ENCODE measurements at regions of chrX and their contacts with region 1.

Region 1: DNA sequence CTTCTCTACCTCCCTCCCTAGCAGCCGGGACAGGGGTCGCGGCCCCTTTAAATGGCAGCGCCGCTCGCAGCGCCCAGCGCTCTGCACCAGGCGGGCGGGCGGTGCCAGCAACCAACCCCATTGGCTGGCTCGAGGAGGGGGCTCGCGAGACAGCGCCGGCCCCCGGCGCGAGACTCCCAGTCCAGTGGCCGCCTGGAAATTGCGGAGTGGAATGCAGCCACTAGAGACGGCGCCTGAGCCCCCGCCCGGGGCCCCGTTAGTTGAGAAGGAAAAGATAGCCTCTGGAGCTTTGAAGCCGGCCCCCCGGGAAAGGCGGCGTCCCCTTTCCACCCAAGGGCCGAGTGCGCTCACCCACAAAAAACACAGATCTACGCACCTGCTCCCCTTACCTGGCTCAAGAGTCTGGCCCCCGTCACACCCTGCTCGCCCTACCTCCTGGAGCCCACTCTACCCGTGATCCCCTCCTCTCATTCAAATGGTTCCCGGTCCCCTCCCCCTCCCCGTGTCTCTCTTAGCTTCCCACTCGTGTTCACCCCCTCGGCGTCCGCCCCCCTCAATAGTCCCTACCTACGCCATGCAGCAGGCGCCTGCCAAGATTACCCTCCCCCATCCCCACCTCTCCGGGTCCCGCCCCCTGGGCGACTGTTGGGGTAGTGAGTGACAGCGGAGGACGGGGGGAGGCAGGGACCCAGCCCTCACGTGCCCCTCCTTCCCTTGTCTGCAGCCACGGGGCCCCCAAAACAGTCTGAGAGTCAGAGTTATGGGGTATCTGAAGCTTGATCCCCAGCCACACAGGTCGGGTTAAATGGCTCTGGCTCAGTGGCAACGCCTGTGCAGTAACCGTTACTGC is at the start of gene ZMYM3:
- DNase-seq: peak; percentile 73 to 85
- ATAC-seq: peak; percentile 83 to 90
- H3K4me3 ChIP-seq: peak within 1 kb of the TSS; percentile 69 to 85 (median 82)
- H3K27ac ChIP-seq: peak within 1 kb of the TSS; percentile 88 to 94 (median 94)
- H3K4me1 ChIP-seq: peaks cover 0 to 8% of the 10 kb centered on the region in 2 donors
- H3K27me3 ChIP-seq: no peaks in the 10 kb centered on the region
- CTCF ChIP-seq: peak in 1 of 5 experiments; percentile 22
- POLR2A ChIP-seq: peak; percentile 48 to 53
- total RNA-seq, gene ZMYM3: 7.1 to 10.2 (median 8.9) TPM

Region 2: DNA sequence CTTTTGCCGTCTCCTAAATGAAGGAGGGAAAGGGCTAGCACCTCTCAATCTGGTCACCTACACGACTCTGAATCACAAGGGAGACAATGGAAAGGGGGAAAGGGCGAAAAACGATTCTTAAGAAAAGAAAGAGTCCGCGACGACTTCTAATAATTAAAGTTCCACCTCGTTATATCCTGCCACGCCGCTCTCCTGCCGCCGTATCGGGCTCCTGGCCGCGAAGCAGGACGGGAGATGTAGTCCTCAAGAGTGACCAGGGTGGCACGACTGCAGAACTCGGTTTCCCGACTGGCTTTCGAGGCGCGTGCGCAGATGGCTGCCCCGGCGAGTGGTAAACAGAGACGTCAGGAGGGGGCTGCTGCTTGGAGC is 158.8 kb before region 1 on chrX and contains the start of gene FOXO4:
- in situ Hi-C with region 1: no loop called
- intact Hi-C with region 1: no loop called
- DNase-seq: peak; percentile 85 to 86
- ATAC-seq: peak; percentile 95 to 96
- H3K4me3 ChIP-seq: peak within 1 kb of the TSS; percentile 62 to 71 (median 66)
- H3K27ac ChIP-seq: peak within 1 kb of the TSS; percentile 74 to 87 (median 84)
- H3K4me1 ChIP-seq: peaks cover 9% of the 10 kb centered on the region in 2 donors
- H3K27me3 ChIP-seq: no peaks in the 10 kb centered on the region
- CTCF ChIP-seq: no peak
- POLR2A ChIP-seq: peak; percentile 11 to 38
- total RNA-seq, gene FOXO4: 35.2 to 48.0 (median 41.8) TPM

Region 3: GRCh38 chrX:71107762-71108360 is 146.5 kb before region 1 on chrX:
- in situ Hi-C with region 1: no loop called
- intact Hi-C with region 1: no loop called
- DNase-seq: no peak
- ATAC-seq: no peak
- H3K4me3 ChIP-seq: no peak overlapping the region
- H3K27ac ChIP-seq: no peak overlapping the region
- H3K4me1 ChIP-seq: no peaks in the 10 kb centered on the region
- H3K27me3 ChIP-seq: no peaks in the 10 kb centered on the region
- CTCF ChIP-seq: no peak
- POLR2A ChIP-seq: no peak

Region 4: GRCh38 chrX:71283403-71284143 is 29.3 kb after region 1 on chrX and contains the start of gene NONO:
- in situ Hi-C with region 1: no loop called
- intact Hi-C with region 1: loop called (anchors 1 kb)
- DNase-seq: peak; percentile 87 to 88
- ATAC-seq: peak; percentile 99 to 100
- H3K4me3 ChIP-seq: peak within 1 kb of the TSS; percentile 67 to 87 (median 71)
- H3K27ac ChIP-seq: peak within 1 kb of the TSS; percentile 82 to 95 (median 90)
- H3K4me1 ChIP-seq: peaks cover 21 to 23% of the 10 kb centered on the region in 2 donors
- H3K27me3 ChIP-seq: no peaks in the 10 kb centered on the region
- CTCF ChIP-seq: no peak
- POLR2A ChIP-seq: peak; percentile 70 to 74
- total RNA-seq, gene NONO: 90.5 to 101 (median 92.9) TPM